CD4-positive, alpha-beta T cell (primary cell): ENCODE measurements at regions of chr9 and their contacts with region 1.

Region 1: GRCh38 chr9:109440797-109441287 is 57.3 kb downstream of the PTPN3 start:
- DNase-seq: peak in 12 of 14 experiments; percentile 2 to 60 (median 13)
- ATAC-seq: peak; percentile 94
- H3K4me3 ChIP-seq: no peak overlapping the region
- H3K4me3 Mint-ChIP-seq: no peak overlapping the region
- H3K27ac ChIP-seq: no peak overlapping the region
- H3K27ac Mint-ChIP-seq: no peak overlapping the region
- H3K4me1 ChIP-seq: peaks cover 7% of the 10 kb centered on the region
- H3K4me1 Mint-ChIP-seq: peaks cover 16% of the 10 kb centered on the region
- H3K27me3 ChIP-seq: peaks cover 3 to 12% of the 10 kb centered on the region in 2 experiments
- H3K27me3 Mint-ChIP-seq: peaks cover 19% of the 10 kb centered on the region
- CTCF ChIP-seq: peak; percentile 63

Region 2: GRCh38 chr9:109469646-109470358 is 29.0 kb after region 1 on chr9:
- CTCF ChIA-PET with region 1: interaction called, 4 read pairs
- POLR2A ChIA-PET with region 1: no interaction called
- intact Hi-C with region 1: loop called in 1 of 2 experiments (anchors 1 kb)
- DNase-seq: peak; percentile 20 to 67 (median 32)
- ATAC-seq: peak; percentile 66
- H3K4me3 ChIP-seq: no peak overlapping the region
- H3K4me3 Mint-ChIP-seq: no peak overlapping the region
- H3K27ac ChIP-seq: no peak overlapping the region
- H3K27ac Mint-ChIP-seq: no peak overlapping the region
- H3K4me1 ChIP-seq: no peaks in the 10 kb centered on the region
- H3K4me1 Mint-ChIP-seq: no peaks in the 10 kb centered on the region
- H3K27me3 ChIP-seq: peaks cover 4 to 9% of the 10 kb centered on the region in 2 experiments
- H3K27me3 Mint-ChIP-seq: peaks cover 11% of the 10 kb centered on the region
- CTCF ChIP-seq: peak; percentile 87